ENCODE measurements at regions of chr2 and their contacts with region 1.

Region 1: DNA sequence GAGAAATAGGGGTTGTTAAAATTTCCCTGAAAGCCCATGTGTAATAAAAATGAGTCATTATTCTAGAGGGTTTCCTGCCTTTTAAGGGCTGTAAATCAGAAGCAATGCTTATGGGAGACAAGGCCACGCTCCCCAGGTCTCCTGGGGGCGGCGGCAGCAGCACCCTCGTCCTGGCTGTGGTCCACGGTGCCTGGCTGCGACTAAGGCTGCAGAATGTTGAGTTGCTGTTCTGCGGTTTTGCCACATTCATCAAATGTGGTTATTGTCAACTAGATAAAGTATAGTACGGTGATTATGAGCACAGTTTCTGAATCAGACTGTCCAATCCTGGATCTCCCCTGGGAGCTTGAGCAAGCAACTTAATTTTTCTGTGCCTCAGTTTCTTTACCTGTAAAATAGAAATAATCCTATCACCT is 11.9 kb upstream of the AGFG1 start:
- DNase-seq: peak; percentile 83
- H3K4me3 Mint-ChIP-seq: peak overlapping the region; percentile 51
- H3K27ac Mint-ChIP-seq: peak overlapping the region; percentile 90
- H3K4me1 Mint-ChIP-seq: peaks cover 74% of the 10 kb centered on the region
- H3K27me3 Mint-ChIP-seq: no peaks in the 10 kb centered on the region

Region 2: GRCh38 chr2:227324995-227325838 is 134.9 kb before region 1 on chr2 and contains the start of gene MFF:
- CTCF ChIA-PET with region 1: no interaction called
- POLR2A ChIA-PET with region 1: no interaction called
- intact Hi-C with region 1: loop called (anchors 2 kb)
- DNase-seq: peak; percentile 97
- H3K4me3 Mint-ChIP-seq: peak within 1 kb of the TSS; percentile 90
- H3K27ac Mint-ChIP-seq: peak within 1 kb of the TSS; percentile 89
- H3K4me1 Mint-ChIP-seq: peaks cover 32% of the 10 kb centered on the region
- H3K27me3 Mint-ChIP-seq: no peaks in the 10 kb centered on the region
- total RNA-seq, gene MFF: 73.2 to 74.1 TPM

Region 3: GRCh38 chr2:227406177-227407031 is 53.7 kb before region 1 on chr2:
- CTCF ChIA-PET with region 1: interaction called, 17 read pairs
- POLR2A ChIA-PET with region 1: interaction called, 22 read pairs
- intact Hi-C with region 1: loop called (anchors 1 kb)
- DNase-seq: no peak
- H3K4me3 Mint-ChIP-seq: no peak overlapping the region
- H3K27ac Mint-ChIP-seq: no peak overlapping the region
- H3K4me1 Mint-ChIP-seq: peaks cover 34% of the 10 kb centered on the region
- H3K27me3 Mint-ChIP-seq: no peaks in the 10 kb centered on the region

Region 4: GRCh38 chr2:227471924-227472264 is 11.8 kb after region 1 on chr2 and contains the start of gene AGFG1:
- CTCF ChIA-PET with region 1: interaction called, 8 read pairs
- POLR2A ChIA-PET with region 1: interaction called, 3 read pairs
- intact Hi-C with region 1: loop called (anchors 1 kb)
- DNase-seq: peak; percentile 90
- H3K4me3 Mint-ChIP-seq: peak within 1 kb of the TSS; percentile 82
- H3K27ac Mint-ChIP-seq: peak within 1 kb of the TSS; percentile 77
- H3K4me1 Mint-ChIP-seq: peaks cover 50% of the 10 kb centered on the region
- H3K27me3 Mint-ChIP-seq: no peaks in the 10 kb centered on the region
- total RNA-seq, gene AGFG1: 119 to 127 TPM

Region 5: GRCh38 chr2:227528803-227529202 is 68.7 kb after region 1 on chr2:
- CTCF ChIA-PET with region 1: no interaction called
- POLR2A ChIA-PET with region 1: no interaction called
- intact Hi-C with region 1: loop called (anchors 2 kb)
- DNase-seq: no peak
- H3K4me3 Mint-ChIP-seq: no peak overlapping the region
- H3K27ac Mint-ChIP-seq: peak overlapping the region; percentile 56
- H3K4me1 Mint-ChIP-seq: peaks cover 22% of the 10 kb centered on the region
- H3K27me3 Mint-ChIP-seq: no peaks in the 10 kb centered on the region

Region 6: DNA sequence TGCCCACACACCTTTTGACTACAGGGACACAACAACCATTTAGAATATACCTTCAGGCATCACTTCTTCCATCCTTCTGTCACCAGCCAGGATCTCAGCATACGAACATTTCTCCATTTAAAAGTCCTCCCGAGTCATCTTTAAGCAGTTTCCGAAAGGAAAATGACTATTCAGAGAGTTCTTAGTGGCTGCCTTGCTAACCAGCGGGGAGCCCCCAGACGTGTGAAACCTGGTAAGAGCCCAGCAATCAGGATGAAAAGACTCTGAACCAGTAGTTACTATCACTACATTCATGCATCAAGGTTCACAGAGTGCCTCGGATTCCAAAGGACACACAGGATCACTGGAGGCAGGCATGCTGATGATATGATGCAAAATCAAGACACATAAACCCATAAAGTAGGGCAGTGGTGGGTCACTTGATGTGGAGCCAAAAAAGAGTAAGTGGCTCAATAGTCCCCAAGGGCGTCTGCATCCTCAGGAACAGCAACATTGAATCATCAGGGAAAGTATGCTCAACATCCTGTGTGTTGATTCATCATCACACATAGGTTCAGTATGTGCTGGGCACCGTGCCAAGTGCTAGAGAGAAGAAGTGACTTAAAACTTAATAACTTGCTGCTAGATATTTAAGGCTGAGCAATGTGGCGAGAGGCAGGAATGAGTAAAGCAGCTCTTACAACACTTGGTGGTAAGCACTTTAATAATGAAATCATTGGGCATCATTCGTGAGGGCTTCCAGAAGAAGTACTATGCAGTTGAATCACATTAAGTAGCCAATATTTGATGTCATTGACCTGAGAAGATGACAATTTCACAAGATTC is 358.0 kb after region 1 on chr2:
- CTCF ChIA-PET with region 1: no interaction called
- POLR2A ChIA-PET with region 1: no interaction called
- intact Hi-C with region 1: loop called (anchors 1 kb)
- DNase-seq: peak; percentile 94
- H3K4me3 Mint-ChIP-seq: peak overlapping the region; percentile 42
- H3K27ac Mint-ChIP-seq: peak overlapping the region; percentile 79
- H3K4me1 Mint-ChIP-seq: peaks cover 39% of the 10 kb centered on the region
- H3K27me3 Mint-ChIP-seq: peaks cover 5% of the 10 kb centered on the region

Measured in activated CD4-positive, alpha-beta memory T cell treated with anti-CD3 and anti-CD28 coated beads for 36 hours (primary cell).